Pancreas (tissue), 10 donors: ENCODE measurements at regions of chr9 and their contacts with region 1.

Region 1: DNA sequence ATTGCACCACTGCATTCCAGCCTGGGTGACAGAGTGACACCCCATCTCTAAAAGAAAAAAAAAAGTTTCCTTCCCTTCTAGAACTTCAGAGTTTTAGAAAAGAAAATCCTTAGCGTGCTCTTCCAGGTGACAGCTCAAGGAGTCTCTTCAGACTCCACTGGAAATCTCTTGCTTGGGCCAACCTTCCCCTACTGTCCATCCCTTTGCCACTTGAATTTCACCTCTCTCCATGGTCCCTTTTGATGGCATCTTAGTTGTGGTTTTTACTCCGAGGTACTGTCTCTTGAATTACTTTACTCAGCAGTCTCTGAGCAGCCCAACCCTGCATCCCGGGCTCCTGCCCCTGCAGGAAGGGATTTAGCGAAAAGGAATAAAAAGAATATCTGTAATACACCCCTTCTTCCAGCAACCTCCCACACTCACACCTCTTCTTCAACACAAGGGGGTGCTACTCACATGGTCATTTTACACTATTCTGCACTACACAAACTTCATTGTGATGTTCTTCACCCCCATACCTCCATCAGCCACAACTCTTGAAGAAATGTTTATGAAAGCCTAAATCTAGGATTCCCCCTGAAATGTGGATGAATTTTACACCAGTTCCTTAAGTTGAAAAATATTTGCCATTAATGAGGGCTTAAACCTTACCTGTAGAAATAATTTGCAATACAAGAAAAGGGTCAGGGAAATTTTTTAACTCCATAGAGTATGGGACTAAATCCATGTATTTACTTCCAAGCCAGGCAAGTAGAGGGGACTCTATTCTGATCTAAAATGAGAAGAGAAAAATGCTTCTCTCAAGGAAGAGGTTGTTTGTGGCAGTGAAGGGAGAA is 25.9 kb downstream of the TPD52L3 start:
- DNase-seq: peak in 2 of 6 donors; percentile 3 to 21
- ATAC-seq: peak; percentile 74 to 93 (median 92)
- H3K4me3 ChIP-seq: no peak overlapping the region
- H3K27ac ChIP-seq: no peak overlapping the region
- H3K4me1 ChIP-seq: no peaks in the 10 kb centered on the region
- H3K27me3 ChIP-seq: no peaks in the 10 kb centered on the region
- CTCF ChIP-seq: peak; percentile 60 to 78 (median 72)

Region 2: DNA sequence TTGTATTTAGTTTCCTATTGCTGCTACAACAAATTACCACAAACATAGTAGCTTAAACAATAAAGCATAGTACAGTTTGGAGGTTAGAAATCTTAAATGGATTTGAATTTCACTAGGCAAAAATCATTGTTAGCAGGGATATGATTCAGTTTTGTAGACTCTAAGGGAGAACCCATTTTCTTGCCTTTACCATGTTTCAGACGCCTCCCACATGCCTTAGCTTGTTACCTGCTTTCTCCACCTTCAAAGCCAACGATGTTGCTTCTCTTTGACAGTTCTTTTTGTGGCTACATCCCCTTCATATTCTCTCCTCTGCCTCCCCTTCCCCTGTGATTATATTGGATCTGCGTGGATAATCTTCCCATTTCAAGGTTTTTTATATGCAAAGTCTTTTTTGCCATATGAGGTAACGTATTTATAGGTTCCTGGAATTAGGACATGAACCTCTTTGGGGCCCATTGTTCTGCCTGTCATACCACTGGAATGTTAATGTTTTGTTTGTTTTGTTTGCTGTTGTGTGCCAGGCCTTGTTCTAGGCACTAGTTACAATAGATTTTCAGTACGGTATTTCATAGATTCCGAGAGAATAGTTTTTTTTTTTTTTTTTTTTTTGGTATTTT is 113.0 kb after region 1 on chr9:
- intact Hi-C with region 1: no loop called
- DNase-seq: no peak
- ATAC-seq: peak in 1 of 4 donors; percentile 32
- H3K4me3 ChIP-seq: no peak overlapping the region
- H3K27ac ChIP-seq: no peak overlapping the region
- H3K4me1 ChIP-seq: peaks cover 0 to 5% (median 0%) of the 10 kb centered on the region in 3 donors
- H3K27me3 ChIP-seq: no peaks in the 10 kb centered on the region
- CTCF ChIP-seq: no peak

Region 3: DNA sequence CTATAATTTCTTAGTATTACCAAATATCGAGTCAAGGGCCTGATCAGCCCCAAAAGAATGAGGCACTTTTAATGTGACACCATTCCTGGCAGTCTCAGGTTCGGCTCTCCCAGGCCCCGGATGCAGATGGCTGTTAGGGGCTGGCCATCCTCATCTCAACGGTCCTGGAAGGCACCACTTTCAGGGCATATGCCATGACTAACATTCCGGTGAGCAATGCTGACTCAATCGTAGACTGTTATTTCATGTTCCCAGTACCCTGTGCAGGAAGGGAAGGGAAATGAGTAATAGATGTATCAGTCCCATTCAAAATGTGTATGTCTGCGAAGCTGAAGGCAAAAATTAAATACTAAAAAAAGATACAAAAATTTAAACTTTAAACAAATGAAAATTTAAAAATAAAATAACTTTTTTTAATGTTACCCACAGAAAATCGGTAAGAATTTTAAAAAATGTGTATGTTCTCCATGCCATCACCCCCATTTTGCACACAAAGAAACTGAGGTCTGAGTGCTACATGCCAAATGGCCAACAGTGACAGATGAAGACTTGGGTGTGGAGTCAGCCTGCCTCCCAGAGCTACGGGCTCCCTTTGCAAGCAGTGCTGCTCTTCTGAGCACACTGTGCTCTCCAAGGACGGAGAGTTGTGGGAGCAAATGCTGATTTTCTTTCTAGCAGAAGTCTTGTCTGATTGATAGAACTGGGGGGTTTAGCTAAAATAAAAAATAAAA is 212.5 kb after region 1 on chr9:
- intact Hi-C with region 1: loop called in 2 of 3 experiments (anchors 2 to 5 kb)
- DNase-seq: no peak
- ATAC-seq: peak in 2 of 4 donors; percentile 49 to 57
- H3K4me3 ChIP-seq: no peak overlapping the region
- H3K27ac ChIP-seq: no peak overlapping the region
- H3K4me1 ChIP-seq: no peaks in the 10 kb centered on the region
- H3K27me3 ChIP-seq: no peaks in the 10 kb centered on the region
- CTCF ChIP-seq: no peak